PC-3 (cell line): ENCODE measurements at regions of chr14 and their contacts with region 1.

Region 1: GRCh38 chr14:20613094-20614037 is 22.2 kb upstream of the RNASE12 start:
- DNase-seq: peak; percentile 99
- ATAC-seq: peak; percentile 75
- H3K4me3 ChIP-seq: peak overlapping the region; percentile 90
- H3K27ac ChIP-seq: peak overlapping the region; percentile 21
- H3K4me1 ChIP-seq: peaks cover 28% of the 10 kb centered on the region
- H3K27me3 ChIP-seq: no peaks in the 10 kb centered on the region
- CTCF ChIP-seq: peak; percentile 83

Region 2: DNA sequence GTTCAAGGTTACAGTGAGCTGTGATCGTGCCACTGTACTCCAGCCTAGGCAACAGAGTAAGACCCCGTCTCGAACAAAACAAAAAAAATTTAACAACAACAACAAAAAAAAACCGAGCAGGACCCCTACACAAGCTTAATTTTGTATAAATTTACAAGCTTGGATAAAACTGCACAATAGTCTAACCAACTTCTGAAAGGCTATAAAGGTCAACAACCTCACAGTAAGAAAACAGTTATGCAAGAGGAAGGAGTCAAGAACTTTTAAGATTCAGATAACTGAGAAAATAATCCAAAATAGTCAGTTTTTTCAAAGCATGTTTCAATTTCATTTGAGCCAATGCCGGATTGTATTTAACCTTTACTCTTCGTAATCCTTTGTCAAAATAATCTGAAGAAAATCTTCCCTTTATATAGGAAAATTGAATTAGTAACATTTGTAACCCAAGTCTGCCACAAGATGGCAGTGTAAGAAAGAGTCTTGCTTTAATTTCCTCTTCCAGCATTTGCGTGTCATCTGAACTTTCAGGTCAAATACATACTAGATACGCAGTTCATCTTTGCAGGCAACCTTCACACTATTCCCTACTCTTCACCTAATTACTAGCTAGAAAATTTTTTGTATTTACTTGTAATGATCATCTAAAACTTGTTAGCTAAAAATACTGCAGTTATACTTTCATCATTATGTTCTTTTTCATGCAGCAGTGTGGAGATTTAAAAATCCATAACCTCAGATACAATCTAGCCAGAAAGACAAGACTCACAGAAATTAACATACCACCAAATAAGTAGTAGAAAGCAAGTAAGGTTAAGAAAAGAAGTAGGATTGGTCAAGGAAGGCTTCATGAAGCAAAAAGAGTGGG is 286.1 kb before region 1 on chr14:
- CTCF ChIA-PET with region 1: interaction called, 3 read pairs
- POLR2A ChIA-PET with region 1: no interaction called
- intact Hi-C with region 1: loop called (anchors 1 kb)
- DNase-seq: peak; percentile 81
- ATAC-seq: peak; percentile 45; the same call in 1 of the 2 replicates
- H3K4me3 ChIP-seq: no peak overlapping the region
- H3K27ac ChIP-seq: no peak overlapping the region
- H3K4me1 ChIP-seq: peaks cover 7% of the 10 kb centered on the region
- H3K27me3 ChIP-seq: no peaks in the 10 kb centered on the region
- CTCF ChIP-seq: peak; percentile 88

Region 3: DNA sequence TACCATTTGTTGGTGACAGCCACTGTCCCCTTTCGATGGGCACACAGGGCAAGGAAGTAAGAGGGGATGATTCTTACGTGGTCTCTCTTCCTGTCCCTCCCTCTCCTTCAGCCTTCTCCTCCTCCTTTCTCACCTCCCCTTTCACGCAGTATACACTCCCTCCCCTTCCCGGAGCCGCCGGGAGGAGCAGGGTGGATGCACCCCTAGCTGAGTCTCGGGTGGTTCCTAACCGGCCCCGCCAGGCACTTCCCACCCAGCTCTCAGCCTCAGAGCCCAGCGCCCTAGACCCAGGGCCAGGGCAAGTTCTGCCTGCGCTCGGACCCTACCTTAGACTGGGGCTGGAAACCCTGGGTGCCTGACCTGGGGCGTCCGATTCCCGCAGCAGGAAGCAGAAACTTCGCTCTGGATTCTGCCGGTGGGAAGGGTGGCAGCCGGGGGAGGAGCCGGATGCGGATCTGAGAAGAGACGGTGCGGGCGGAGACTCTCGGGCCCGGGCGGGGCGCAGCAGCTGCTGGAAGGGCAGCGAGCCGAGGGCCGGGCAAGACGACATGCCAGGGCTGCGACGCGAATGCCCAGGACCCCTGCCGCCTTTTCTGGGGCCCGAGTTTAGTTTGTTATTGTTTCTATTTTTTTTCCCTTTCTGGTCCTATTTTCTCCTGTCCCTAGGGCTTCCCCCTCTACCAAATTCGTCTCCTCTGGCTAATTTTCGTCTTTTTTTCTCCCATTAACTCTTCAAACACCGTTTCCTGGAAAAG is 200.1 kb before region 1 on chr14 and contains the start of gene TEP1:
- CTCF ChIA-PET with region 1: interaction called, 11 read pairs
- POLR2A ChIA-PET with region 1: no interaction called
- intact Hi-C with region 1: loop called (anchors 2 kb)
- DNase-seq: peak; percentile 87
- ATAC-seq: peak; percentile 86
- H3K4me3 ChIP-seq: peak within 1 kb of the TSS; percentile 98
- H3K27ac ChIP-seq: peak within 1 kb of the TSS; percentile 93
- H3K4me1 ChIP-seq: peaks cover 32% of the 10 kb centered on the region
- H3K27me3 ChIP-seq: no peaks in the 10 kb centered on the region
- CTCF ChIP-seq: no peak
- total RNA-seq, gene TEP1: 8.9 and 11.7 TPM in 2 replicates

Region 4: DNA sequence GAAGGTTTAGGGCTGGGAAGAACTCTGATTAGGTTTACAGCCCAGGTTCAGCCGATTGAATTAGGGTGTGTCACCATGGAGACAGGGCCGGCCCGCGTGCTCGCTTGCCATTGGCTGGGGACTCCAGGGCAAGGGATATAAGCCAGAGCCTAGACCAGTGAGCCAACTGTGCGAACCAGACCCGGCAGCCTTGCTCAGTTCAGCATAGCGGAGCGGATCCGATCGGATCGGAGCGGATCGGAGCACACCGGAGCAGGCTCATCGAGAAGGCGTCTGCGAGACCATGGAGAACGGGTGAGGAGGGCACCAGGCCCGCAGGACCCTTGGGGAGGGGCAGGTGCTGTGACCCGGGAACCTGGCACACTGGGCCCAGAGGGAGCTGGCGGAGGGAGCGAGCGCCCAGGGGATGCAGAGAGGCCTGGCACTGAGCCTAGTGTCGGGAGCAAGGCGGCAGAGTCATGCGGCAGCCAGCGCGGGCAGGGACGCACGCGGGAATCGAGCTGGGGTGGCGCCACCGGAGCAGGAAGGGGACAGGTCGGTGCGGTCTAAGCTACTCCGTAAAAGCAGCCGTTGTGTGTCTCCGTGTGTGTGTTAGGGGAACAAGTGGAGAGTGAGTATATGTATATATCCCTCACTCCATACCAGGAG is 144.0 kb before region 1 on chr14 and contains the start of gene PNP:
- CTCF ChIA-PET with region 1: no interaction called
- POLR2A ChIA-PET with region 1: no interaction called
- intact Hi-C with region 1: loop called (anchors 5 kb)
- DNase-seq: peak; percentile 92
- ATAC-seq: peak; percentile 94
- H3K4me3 ChIP-seq: peak within 1 kb of the TSS; percentile 92
- H3K27ac ChIP-seq: peak within 1 kb of the TSS; percentile 80
- H3K4me1 ChIP-seq: peaks cover 18% of the 10 kb centered on the region
- H3K27me3 ChIP-seq: no peaks in the 10 kb centered on the region
- CTCF ChIP-seq: no peak
- total RNA-seq, gene PNP: 108 and 118 TPM in 2 replicates

Region 5: GRCh38 chr14:20632682-20633428 is 19.5 kb after region 1 on chr14:
- CTCF ChIA-PET with region 1: interaction called, 4 read pairs
- POLR2A ChIA-PET with region 1: no interaction called
- intact Hi-C with region 1: loop called (anchors 1 kb)
- DNase-seq: peak; percentile 91
- ATAC-seq: peak; percentile 66
- H3K4me3 ChIP-seq: peak overlapping the region; percentile 70
- H3K27ac ChIP-seq: no peak overlapping the region
- H3K4me1 ChIP-seq: peaks cover 12% of the 10 kb centered on the region; the same call in 1 of the 2 replicates
- H3K27me3 ChIP-seq: no peaks in the 10 kb centered on the region
- CTCF ChIP-seq: no peak

Region 6: DNA sequence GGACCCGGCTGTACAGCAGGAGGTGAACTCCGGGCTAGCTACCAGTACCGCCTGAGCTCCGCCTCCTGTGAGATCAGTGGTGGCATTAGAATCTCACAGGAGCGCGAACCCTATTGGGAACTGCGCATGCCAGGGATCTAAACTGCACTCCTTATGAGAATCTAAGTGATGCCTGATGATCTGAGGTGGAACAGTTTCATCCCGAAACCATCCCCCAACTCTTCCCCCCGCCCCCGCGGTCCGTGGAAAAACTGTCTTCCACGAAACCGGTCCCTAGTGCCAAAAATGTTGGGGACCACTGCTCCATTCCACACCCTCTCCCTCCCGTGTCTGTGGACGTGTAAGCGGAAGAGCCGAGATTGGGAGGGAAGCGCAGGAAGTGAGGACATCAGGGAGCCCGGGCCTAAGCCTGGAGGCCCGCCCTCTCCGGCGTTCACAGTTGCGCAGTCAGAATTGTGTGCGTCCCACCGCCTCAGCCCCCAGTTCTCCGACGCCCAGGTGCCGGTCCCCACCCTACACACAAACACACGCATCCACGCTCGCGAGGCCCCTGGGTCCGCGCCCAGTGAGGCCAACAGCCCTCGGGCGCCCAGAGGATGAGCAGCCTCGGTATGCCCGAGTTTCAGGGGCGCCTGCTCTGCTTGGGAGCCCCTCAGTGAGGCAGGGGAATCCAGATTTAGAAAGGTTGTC is 69.2 kb after region 1 on chr14:
- CTCF ChIA-PET with region 1: no interaction called
- POLR2A ChIA-PET with region 1: interaction called, 3 read pairs
- intact Hi-C with region 1: loop called (anchors 1 kb)
- DNase-seq: peak; percentile 91
- ATAC-seq: peak; percentile 63
- H3K4me3 ChIP-seq: peak overlapping the region; percentile 85
- H3K27ac ChIP-seq: peak overlapping the region; percentile 80
- H3K4me1 ChIP-seq: peaks cover 25% of the 10 kb centered on the region
- H3K27me3 ChIP-seq: no peaks in the 10 kb centered on the region
- CTCF ChIP-seq: no peak; the same call in 1 of the 2 replicates

Region 7: DNA sequence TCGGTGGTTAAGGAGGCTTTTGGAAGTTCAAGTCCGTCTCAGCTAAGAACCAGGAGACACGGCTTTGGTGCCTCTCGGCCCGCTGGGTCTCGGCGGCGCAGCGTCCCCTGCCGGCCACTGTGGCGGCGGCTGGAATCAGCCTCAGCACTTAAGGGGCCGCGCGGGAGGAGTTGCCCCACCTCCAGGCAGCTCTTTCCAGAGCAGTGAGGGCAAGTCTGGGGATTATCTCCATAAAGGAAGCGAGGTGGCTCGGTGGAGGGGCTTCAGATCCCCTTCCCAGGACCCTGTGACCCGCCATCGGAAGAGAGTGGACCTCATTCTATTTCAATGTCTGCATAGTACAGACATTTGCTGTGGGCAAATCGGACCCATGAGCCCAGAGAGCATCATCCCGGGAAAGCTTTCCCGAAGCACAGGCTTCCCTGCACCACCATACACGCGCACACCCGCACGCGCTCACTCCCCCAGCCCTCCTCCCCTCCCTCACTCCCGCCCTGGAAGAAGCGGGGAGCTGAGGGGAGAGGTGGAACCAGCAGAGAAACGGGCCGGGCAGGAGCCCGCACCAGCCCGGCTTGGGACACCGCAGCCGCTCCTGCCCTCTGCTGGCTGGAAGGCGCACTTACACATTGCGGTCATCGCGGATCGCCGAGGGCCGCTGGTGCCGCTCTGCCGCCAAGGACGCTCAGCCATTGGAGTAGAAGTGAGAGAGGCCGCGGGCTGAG is 357.8 kb after region 1 on chr14:
- CTCF ChIA-PET with region 1: no interaction called
- POLR2A ChIA-PET with region 1: no interaction called
- intact Hi-C with region 1: loop called (anchors 5 kb)
- DNase-seq: peak; percentile 89
- ATAC-seq: peak; percentile 87
- H3K4me3 ChIP-seq: peak overlapping the region; percentile 77
- H3K27ac ChIP-seq: no peak overlapping the region
- H3K4me1 ChIP-seq: peaks cover 9% of the 10 kb centered on the region
- H3K27me3 ChIP-seq: peaks cover 22% of the 10 kb centered on the region; the same call in 1 of the 2 replicates
- CTCF ChIP-seq: peak; percentile 89